PC-3 (cell line): ENCODE measurements at regions of chr5 and their contacts with region 1.

Region 1: GRCh38 chr5:178642351-178642971 is 15.6 kb upstream of the CLK4 start:
- DNase-seq: peak; percentile 99
- ATAC-seq: peak; percentile 79
- H3K4me3 ChIP-seq: peak overlapping the region; percentile 31; the same call in 1 of the 2 replicates
- H3K27ac ChIP-seq: peak overlapping the region; percentile 97
- H3K4me1 ChIP-seq: peaks cover 45% of the 10 kb centered on the region
- H3K27me3 ChIP-seq: no peaks in the 10 kb centered on the region
- CTCF ChIP-seq: no peak

Region 2: DNA sequence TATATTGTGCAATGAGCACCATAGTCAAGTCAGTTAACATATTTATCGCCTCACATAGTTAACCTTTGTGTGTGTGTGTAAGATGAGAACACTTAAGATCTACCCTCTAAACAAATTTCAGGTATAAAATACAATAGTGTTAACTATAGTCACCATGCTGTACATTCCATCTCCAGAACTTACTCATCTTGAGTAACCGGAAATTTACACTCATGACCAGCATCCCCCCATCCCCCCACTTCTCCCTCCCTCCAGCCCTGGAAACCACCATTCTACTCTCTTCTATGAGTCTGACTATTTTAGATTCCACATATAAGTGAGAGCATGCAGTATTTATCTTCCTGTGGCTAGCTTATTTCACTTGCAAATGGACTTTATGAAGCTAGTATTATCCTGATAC is 47.7 kb after region 1 on chr5:
- CTCF ChIA-PET with region 1: no interaction called
- POLR2A ChIA-PET with region 1: no interaction called
- intact Hi-C with region 1: loop called (anchors 2 kb)
- DNase-seq: peak; percentile 91
- ATAC-seq: peak; percentile 87
- H3K4me3 ChIP-seq: no peak overlapping the region
- H3K27ac ChIP-seq: peak overlapping the region; percentile 84
- H3K4me1 ChIP-seq: peaks cover 30% of the 10 kb centered on the region
- H3K27me3 ChIP-seq: no peaks in the 10 kb centered on the region
- CTCF ChIP-seq: no peak

Region 3: DNA sequence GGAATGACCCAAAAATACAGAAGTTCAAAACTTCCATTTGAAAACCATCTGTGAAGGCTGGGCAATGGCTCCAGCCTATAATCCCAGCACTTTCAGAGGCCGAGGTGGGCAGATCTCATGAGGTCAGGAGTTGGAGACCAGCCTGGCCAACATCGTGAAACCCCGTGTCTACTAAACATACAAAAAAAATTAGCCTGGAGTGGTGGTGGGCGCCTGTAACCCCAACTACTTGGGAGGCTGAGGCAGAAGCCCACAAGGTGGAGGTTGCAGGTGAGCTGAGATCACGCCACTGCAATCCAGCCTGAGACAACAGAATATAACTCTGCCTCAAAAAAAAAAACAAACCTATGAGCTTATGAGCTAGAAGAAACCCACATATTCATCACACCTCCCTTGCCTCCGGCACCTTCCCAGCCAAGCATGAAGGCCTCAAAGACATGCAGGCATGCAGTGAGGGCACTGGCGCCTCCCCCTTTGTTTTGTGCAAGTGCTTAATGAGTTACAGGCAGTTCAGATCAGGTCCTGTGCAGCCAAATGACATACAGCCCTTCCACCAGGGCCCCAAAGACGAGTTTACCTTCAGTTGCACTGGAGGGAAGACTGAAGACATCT is 971.1 kb after region 1 on chr5:
- CTCF ChIA-PET with region 1: no interaction called
- POLR2A ChIA-PET with region 1: no interaction called
- intact Hi-C with region 1: no loop called
- DNase-seq: no peak
- ATAC-seq: no peak
- H3K4me3 ChIP-seq: no peak overlapping the region
- H3K27ac ChIP-seq: no peak overlapping the region
- H3K4me1 ChIP-seq: no peaks in the 10 kb centered on the region
- H3K27me3 ChIP-seq: no peaks in the 10 kb centered on the region
- CTCF ChIP-seq: no peak